ENCODE measurements at regions of chr3 and their contacts with region 1.

Region 1: GRCh38 chr3:87359826-87360225 is 83.4 kb upstream of the POU1F1 start:
- DNase-seq: no peak
- ATAC-seq: no peak

Region 2: DNA sequence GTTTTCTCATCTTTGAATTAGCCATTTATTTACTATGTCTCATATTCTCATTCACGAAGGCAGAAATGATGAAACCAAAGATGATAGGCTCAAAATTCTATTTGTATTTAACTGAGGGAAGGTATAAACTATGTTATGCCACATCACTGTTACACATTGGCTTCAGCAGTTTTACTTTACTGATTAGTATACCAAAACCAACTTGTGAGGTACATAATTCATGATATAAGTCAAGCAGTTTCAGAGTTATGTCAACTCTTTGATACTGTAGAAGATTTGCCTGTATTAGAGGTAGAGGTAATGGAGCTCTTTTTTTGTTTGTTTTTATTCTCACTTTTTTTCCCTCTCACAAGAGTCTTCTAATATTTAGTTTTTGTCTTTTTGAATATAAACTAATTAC is 109.8 kb before region 1 on chr3:
- intact Hi-C with region 1: no loop called
- DNase-seq: no peak
- ATAC-seq: no peak

Region 3: DNA sequence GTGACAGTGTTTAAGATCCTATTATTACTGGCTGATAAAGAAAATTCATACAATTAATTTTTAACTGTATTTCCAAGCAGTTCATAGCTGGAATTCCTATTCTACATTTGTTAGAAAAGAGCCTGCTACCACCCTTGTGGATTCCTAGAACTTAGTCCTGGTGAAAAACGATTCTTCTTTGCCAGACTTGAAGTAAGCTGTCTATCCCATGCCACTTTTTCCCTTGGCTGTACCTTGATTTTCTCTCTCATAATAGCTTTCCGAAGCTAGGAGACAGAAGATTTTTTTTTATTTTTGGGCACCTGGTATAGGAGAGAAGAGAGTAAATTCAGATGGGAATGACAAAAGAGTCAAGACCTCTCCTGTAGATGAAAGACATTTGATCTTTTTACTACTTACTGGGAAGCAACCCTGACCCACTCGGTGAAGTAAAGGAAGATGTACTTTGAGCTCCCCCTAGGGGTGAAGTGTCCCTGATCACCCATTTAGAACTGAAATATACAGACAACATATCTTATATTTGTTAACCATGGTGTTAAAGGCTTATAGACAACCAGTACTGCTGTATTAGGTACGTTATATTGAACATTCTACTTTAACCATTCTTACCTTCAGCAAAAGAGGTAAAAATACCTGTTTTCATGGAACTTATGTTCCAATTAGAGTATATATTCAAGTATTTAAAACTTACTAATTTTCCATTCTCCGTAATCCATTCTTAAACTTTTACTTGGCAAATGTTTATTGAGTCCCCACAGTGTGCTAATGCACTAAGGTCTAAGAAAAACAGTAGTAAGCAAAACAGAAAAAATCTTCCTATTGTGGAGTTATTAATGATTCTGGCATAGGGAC is 753.7 kb after region 1 on chr3:
- intact Hi-C with region 1: loop called (anchors 5 kb)
- DNase-seq: no peak
- ATAC-seq: peak; percentile 85